PC-3 (cell line): ENCODE measurements at regions of chr1 and their contacts with region 1.

Region 1: GRCh38 chr1:36342481-36343478 is 19.3 kb upstream of the EVA1B start:
- DNase-seq: peak; percentile 87
- ATAC-seq: peak; percentile 84
- H3K4me3 ChIP-seq: no peak overlapping the region
- H3K27ac ChIP-seq: peak overlapping the region; percentile 82
- H3K4me1 ChIP-seq: peaks cover 15% of the 10 kb centered on the region
- H3K27me3 ChIP-seq: no peaks in the 10 kb centered on the region
- CTCF ChIP-seq: peak; percentile 93

Region 2: DNA sequence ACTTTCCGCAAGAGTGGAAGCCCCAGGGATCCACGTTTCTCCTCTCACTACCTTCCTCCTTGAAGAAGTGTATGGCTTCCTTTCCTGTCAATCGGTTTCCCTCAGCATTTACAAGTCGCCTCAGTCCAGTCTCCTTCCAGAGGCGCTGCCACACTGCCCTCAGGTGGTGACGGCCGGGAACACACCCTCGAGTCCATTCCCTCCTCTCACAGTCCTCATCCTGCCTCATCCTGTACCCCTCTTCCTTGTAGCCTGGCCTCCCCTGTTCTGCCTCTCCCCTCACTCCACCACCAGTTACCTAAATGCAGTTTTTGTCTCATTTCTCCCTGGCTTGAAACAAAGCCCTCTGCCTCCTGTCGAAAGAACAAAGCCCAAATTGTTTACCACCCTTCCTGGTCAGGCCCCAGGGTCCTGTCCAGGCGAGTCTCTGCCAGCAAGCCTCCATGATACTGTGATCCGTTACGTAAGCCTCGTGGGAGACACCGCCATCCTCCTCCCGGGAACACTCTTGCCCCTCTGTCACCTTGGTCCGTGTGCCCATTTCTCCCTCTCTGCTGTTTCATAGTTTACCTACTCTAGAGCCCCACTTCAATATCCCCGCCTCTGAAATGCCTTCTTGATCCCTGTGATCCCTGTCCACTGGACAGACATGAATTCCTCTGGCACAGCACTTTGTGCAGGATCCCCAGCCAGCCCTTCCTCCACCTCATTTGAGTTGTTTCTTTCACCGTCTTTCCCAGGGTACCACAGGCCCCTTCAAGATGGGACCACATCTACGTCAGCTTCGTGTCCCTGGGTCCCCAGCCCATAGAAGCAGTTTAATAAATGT is 78.3 kb after region 1 on chr1:
- CTCF ChIA-PET with region 1: interaction called, 3 read pairs
- POLR2A ChIA-PET with region 1: no interaction called
- intact Hi-C with region 1: loop called (anchors 1 kb)
- DNase-seq: peak; percentile 95
- ATAC-seq: peak; percentile 92
- H3K4me3 ChIP-seq: no peak overlapping the region
- H3K27ac ChIP-seq: no peak overlapping the region
- H3K4me1 ChIP-seq: peaks cover 20% of the 10 kb centered on the region
- H3K27me3 ChIP-seq: no peaks in the 10 kb centered on the region
- CTCF ChIP-seq: peak; percentile 94

Region 3: DNA sequence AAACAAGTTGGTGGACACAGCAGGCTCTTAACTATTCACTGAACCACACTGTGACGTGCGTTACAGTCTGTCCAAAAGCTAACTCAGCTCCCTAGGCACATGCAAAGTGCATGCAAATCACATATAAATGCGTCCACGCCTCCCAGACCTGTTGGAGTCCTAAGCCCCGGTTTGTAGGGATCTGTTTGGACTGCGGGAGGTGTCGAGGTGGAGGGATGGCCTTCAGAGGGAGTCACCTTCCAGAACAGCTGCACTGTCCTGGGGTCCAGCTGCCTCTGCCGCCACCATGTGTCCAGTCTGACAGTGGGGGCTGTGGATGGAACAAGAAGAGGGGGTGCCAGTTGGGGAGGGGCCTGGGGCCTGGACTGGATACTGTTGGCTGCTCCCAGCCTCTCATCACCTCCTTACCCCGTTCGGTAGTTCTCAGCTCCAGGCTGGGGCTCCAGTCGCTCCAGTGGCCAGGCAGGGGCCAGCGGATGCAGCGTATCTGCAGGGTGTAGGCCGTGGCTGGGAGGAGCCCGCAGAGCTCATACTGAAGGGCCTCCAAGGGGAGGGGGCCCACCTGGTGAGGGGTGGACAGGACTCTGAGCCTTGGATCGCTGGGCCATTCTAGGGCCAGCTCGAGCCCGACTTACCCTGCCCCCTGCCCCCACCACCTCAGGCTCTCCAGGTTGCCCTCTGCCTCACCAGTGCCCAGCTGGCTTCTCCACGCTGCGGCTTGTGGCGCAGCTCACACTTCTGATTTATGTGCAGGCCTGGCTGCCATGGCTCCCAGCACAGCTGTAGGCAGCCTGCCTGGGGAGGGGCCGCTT is 129.3 kb after region 1 on chr1:
- CTCF ChIA-PET with region 1: no interaction called
- POLR2A ChIA-PET with region 1: no interaction called
- intact Hi-C with region 1: no loop called
- DNase-seq: no peak
- ATAC-seq: no peak
- H3K4me3 ChIP-seq: no peak overlapping the region
- H3K27ac ChIP-seq: no peak overlapping the region
- H3K4me1 ChIP-seq: no peaks in the 10 kb centered on the region
- H3K27me3 ChIP-seq: no peaks in the 10 kb centered on the region
- CTCF ChIP-seq: no peak